Posterior vena cava (tissue), 2 donors: ENCODE measurements at regions of chr10 and their contacts with region 1.

Region 1: DNA sequence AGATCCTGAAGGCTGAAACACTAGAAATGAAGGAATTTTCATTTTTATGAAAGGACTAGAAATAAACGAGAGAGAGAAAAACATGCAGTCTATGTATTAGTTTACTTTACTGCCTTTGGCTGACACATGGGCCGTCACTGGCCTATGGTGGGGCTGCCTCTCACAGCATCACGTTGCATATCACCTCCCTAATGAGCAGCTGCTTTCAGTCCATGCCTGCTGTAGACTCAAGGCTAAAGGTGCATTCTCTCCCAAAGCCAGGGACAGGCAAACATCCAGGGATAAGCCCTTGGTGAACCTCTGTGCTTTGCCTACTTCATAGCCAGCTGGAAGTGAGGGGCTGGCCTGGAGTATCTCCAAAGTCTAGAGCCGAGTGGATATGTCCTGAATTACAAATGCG is 359.4 kb downstream of the GPAM start:
- DNase-seq: no peak

Region 2: GRCh38 chr10:111766464-111766863 is 57.7 kb before region 1 on chr10:
- intact Hi-C with region 1: loop called in 1 of 2 experiments (anchors 2 kb)
- DNase-seq: no peak